PC-9 (cell line): ENCODE measurements at regions of chr17 and their contacts with region 1.

Region 1: DNA sequence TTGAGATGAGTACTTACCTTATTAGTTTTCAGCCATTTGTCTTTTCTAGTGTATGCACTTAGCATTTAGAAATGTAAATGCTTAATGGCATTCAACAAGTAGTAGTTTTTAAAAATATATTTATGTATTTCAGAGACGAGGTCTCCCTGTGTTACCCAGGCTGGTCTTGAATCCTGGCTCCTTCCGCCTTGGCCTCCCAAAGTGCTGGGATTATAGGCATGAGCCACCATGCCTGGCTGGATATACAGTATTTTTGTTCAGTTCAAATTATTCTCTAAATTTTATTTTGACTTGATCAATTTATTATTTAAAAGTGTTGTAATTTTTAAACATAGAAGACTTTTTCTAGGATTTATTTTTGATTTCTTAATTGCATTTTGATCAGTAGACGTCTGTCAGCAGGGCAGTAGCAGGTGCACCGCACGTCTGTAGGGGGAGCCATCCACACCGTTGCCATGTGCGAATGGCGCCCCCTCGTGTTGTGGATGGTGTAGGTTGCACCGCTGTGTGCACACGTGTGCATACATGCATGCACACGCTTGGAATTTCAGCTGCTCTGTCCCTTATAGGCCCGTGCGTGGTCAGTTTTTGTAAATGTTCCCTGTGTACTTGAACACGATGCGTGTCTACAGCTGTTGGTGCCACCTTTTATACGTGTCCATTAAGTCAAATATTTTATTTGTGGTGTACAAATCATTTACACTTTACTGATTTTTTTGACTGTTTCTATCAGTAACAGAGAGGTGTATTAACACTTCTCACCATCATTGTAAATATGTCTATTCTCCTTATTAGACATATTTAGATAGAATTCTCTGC is 30.6 kb downstream of the RPTOR start:
- DNase-seq: peak; percentile 66 to 87
- H3K4me3 ChIP-seq: no peak overlapping the region
- H3K27ac ChIP-seq: no peak overlapping the region
- H3K4me1 ChIP-seq: no peaks in the 10 kb centered on the region
- H3K27me3 ChIP-seq: no peaks in the 10 kb centered on the region
- CTCF ChIP-seq: peak; percentile 96

Region 2: DNA sequence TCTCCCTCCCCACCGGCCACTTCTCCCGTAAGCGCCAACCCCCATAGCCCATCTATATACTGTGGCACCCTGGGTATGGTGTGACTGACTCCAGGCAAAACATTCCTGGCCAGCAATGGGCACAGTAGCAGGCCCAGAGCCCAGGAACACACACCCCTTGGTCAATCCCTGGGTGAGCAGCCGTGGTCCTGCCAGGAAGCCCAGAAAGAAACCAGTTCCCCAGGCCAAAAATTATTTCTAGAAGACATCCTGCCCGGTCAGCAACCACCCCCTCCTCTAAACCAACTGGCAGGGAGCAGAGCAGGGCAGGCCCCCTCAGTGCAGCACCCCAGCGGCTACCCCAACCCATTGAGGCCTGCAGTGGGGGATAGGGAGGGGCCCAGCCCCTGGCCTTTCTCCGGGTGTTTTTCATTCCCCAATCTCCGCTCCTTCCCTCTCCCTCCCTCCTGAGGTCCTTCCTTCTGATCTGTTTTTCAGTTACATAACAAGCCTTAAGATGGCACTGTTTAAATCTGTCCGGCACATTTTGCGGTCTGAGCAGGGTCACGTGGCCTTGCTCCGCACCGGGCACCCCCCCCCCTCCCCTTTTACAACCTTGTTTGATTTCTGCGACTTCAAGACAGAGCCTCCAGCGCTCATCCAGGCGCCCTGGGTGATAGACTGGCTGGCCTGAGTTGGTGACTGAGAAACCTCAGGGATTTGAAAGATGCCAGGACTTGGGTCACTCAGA is 100.9 kb before region 1 on chr17:
- CTCF ChIA-PET with region 1: no interaction called
- POLR2A ChIA-PET with region 1: no interaction called
- intact Hi-C with region 1: loop called (anchors 1 kb)
- DNase-seq: no peak
- H3K4me3 ChIP-seq: no peak overlapping the region; the same call in 1 of the 2 replicates
- H3K27ac ChIP-seq: no peak overlapping the region
- H3K4me1 ChIP-seq: 0 out of 2 replicates have a peak, but pooled peaks cover 9% of the 10 kb centered on the region
- H3K27me3 ChIP-seq: peaks cover 25% of the 10 kb centered on the region
- CTCF ChIP-seq: no peak

Region 3: GRCh38 chr17:80970044-80970761 is 394.9 kb after region 1 on chr17:
- CTCF ChIA-PET with region 1: no interaction called
- POLR2A ChIA-PET with region 1: no interaction called
- intact Hi-C with region 1: loop called (anchors 2 kb)
- DNase-seq: peak in 1 of 2 experiments; percentile 37
- H3K4me3 ChIP-seq: no peak overlapping the region
- H3K27ac ChIP-seq: no peak overlapping the region
- H3K4me1 ChIP-seq: no peaks in the 10 kb centered on the region
- H3K27me3 ChIP-seq: no peaks in the 10 kb centered on the region
- CTCF ChIP-seq: peak; percentile 41; the same call in 1 of the 2 replicates